AG04449 (cell line): ENCODE measurements at regions of chr1 and their contacts with region 1.

Region 1: GRCh38 chr1:100866041-100866900 is 28.4 kb downstream of the EXTL2 start:
- DNase-seq: no peak
- H3K4me3 ChIP-seq: no peak overlapping the region
- CTCF ChIP-seq: peak; percentile 42

Region 2: GRCh38 chr1:100449477-100449876 is 416.8 kb before region 1 on chr1:
- CTCF ChIA-PET with region 1: interaction called, 163 read pairs
- POLR2A ChIA-PET with region 1: no interaction called
- DNase-seq: no peak
- H3K4me3 ChIP-seq: no peak overlapping the region
- CTCF ChIP-seq: no peak

Region 3: DNA sequence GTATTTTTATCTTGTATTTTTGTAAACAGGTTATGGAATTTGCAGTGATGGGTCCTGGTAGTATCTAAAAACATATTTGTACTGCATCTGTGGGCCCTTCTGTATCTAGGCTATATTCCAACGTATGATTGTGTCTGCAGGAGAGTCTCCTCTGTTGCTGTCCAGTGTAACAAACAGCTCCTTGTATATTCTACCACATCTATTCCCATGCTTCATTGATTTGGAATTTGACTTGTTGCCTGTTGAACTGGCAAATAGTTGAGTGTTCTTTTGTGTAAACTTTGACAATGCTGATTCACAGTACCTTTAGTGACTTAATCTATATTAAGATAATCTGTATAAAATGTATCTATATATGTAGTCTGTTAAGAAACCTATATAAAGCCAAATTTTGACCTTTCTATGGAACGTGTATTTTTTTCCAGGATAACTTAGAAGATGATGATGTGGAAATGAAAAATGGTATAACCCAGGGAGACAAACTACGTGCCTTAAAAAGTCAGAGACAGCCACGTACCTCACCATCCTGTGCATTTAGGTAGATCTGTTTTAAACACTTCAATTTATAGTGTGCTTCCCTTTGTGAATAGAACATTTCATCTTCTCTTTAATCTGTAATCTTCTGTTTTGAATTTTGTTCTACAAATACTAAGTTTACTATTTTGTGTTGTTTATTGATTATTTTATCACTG is 371.7 kb before region 1 on chr1:
- CTCF ChIA-PET with region 1: interaction called, 12 read pairs
- POLR2A ChIA-PET with region 1: no interaction called
- DNase-seq: no peak
- H3K4me3 ChIP-seq: no peak overlapping the region
- CTCF ChIP-seq: no peak

Region 4: DNA sequence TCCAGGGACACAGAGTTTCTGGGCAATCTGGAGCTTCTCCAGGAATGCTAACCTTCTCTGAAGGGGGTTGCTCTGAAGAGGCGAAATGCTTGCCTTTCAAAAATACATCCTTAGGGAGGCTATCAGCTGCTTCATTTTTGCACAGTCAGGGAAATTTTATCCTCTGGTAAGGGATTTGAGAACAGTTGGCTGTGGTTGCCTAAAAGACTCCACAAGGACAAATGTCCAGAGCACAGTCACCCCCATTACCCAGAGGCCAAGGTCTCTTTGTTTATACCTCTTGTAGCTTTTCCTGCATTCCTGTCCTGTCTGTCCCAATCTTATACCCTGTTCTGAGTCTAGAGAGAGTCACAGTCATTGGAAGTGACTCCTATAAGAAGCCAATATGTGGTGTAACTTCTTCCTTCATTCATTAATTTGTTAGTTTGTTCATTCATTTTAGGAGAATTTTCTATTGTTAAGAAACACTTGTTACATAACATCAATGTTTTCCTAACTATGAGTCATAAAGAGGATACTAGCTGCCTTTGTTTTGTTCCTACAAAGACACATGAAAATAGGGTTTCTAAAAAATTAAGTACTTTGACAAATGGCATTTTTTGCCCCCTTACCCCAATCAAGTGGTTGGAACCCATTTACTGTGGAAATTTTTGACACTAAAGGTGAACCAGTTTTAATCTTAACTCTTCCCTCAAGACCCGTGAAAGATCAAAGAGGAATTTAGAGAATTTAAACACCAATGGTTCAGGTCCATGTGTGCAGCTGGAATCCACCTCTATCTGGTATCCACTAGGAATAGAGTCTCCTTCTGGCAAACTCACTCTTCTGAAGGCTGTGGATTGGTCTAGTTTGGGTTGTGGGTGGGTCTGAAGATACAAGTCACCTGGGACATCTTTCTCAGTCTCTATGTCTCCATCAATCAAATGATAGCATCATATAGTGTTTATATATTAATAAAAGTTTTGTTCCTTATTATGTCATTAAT is 281.2 kb before region 1 on chr1:
- CTCF ChIA-PET with region 1: interaction called, 11 read pairs
- POLR2A ChIA-PET with region 1: no interaction called
- DNase-seq: no peak
- H3K4me3 ChIP-seq: no peak overlapping the region
- CTCF ChIP-seq: no peak

Region 5: DNA sequence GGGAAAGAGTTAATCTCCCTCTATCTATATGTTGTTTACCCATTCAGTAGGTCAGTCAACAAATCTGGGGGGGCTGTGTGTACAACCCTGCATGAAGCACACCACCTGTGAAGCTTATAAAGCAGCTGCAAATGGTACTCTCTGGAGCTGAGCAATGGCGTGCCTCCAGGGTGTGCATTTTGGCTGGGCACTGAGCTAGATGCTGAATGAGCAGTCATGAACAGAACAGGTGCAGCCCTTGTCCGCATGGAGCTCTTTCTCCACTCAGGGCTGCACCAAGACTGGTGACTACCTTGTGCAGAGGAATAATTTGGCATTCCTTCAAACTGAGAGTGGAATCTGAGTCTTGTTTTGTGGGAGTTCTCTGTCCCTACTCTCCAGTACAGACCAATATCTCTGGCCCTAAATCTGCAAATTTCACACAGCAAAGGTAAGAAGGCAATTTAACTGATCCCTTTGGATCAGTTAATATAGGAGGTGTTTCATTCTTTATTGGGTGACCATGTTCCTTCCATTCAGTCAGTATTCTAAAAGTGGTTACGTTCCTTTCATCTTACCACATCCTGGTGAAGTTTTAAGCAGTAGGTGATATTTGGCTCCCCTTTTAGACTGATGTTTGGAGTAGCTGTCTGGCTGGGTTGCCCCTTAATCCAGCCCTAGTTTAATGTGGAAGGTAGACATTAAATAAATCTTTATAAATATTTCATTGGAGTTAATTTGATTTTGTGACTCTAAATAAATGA is 252.3 kb before region 1 on chr1:
- CTCF ChIA-PET with region 1: interaction called, 17 read pairs
- POLR2A ChIA-PET with region 1: no interaction called
- DNase-seq: no peak
- H3K4me3 ChIP-seq: no peak overlapping the region
- CTCF ChIP-seq: no peak

Region 6: GRCh38 chr1:100730130-100730529 is 136.1 kb before region 1 on chr1:
- CTCF ChIA-PET with region 1: interaction called, 12 read pairs
- POLR2A ChIA-PET with region 1: no interaction called
- DNase-seq: no peak
- H3K4me3 ChIP-seq: no peak overlapping the region
- CTCF ChIP-seq: no peak

Region 7: DNA sequence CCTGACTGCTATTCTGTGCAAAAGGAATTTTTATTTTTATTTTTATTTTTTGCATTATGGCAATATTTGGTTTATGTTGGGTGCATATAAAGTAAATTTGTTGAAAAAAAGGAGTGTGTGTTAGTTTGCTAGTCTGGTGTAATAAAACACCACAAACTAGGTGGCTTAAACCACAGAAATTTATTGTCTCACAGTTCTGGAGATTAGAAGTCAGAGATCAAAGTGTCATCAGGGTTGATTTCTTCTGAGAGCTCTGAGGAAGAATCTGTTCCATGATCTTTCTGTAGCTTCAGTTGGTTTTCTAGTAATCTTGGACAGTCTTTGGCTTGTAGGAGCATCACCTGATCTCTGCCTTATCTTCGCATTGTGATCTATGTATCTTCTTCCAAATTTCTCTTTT is 36.1 kb after region 1 on chr1:
- CTCF ChIA-PET with region 1: no interaction called
- POLR2A ChIA-PET with region 1: no interaction called
- DNase-seq: no peak
- H3K4me3 ChIP-seq: no peak overlapping the region
- CTCF ChIP-seq: no peak